ENCODE measurements at regions of chr4 and their contacts with region 1.

Region 1: GRCh38 chr4:122732329-122733026 is at the start of gene BBS12:
- DNase-seq: peak; percentile 99
- H3K4me3 ChIP-seq: peak within 1 kb of the TSS; percentile 53 to 56
- H3K27ac ChIP-seq: peak within 1 kb of the TSS; percentile 59 to 65
- H3K4me1 ChIP-seq: no peaks in the 10 kb centered on the region
- H3K27me3 ChIP-seq: no peaks in the 10 kb centered on the region
- CTCF ChIP-seq: peak in 2 of 4 experiments; percentile 27 to 31
- POLR2A ChIP-seq: no peak
- total RNA-seq, gene BBS12: 4.1 to 6.4 TPM

Region 2: DNA sequence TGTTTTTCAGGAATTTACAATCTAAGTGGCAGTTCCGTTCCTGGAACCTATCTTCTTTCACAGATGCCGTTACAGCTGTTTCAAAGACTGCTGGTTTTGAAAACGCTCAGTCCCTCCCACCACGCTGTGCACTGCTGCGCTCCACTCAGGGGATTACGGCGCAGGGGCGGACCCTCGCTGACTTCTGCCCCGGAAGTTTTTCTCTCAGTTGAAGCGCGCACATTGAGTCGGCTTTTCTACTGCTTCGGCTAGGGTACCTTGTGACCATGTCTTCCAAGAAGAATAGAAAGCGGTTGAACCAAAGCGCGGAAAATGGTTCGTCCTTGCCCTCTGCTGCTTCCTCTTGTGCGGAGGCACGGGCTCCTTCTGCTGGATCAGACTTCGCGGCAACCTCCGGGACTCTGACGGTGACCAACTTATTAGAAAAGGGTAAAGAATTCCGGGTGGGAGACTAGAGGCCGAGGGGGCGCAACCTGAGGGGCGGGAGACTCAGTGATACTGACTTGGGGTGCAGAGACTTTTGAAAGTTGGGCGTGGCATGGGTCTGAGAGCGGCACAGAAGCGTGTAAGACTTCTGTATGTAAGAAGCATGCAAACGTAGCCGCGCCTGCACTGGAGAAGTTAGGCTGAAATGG is 190.5 kb after region 1 on chr4:
- intact Hi-C with region 1: loop called (anchors 10 kb)
- DNase-seq: peak; percentile 75
- H3K4me3 ChIP-seq: peak overlapping the region; percentile 54 to 65
- H3K27ac ChIP-seq: peak overlapping the region; percentile 59
- H3K4me1 ChIP-seq: no peaks in the 10 kb centered on the region
- H3K27me3 ChIP-seq: no peaks in the 10 kb centered on the region
- CTCF ChIP-seq: peak in 1 of 4 experiments; percentile 6
- POLR2A ChIP-seq: no peak